ENCODE measurements at regions of chr19 and their contacts with region 1.

Region 1: GRCh38 chr19:13825489-13826391 is 30.5 kb downstream of the ZSWIM4 start:
- DNase-seq: peak; percentile 94
- ATAC-seq: peak; percentile 86
- H3K4me3 Mint-ChIP-seq: peak overlapping the region; percentile 37; the same call in 1 of the 2 replicates
- H3K27ac Mint-ChIP-seq: peak overlapping the region; percentile 92
- H3K4me1 Mint-ChIP-seq: peaks cover 15% of the 10 kb centered on the region
- H3K27me3 Mint-ChIP-seq: no peaks in the 10 kb centered on the region
- CTCF ChIP-seq: 0 out of 2 replicates have a peak, but pooled peaks have one; percentile 35

Region 2: DNA sequence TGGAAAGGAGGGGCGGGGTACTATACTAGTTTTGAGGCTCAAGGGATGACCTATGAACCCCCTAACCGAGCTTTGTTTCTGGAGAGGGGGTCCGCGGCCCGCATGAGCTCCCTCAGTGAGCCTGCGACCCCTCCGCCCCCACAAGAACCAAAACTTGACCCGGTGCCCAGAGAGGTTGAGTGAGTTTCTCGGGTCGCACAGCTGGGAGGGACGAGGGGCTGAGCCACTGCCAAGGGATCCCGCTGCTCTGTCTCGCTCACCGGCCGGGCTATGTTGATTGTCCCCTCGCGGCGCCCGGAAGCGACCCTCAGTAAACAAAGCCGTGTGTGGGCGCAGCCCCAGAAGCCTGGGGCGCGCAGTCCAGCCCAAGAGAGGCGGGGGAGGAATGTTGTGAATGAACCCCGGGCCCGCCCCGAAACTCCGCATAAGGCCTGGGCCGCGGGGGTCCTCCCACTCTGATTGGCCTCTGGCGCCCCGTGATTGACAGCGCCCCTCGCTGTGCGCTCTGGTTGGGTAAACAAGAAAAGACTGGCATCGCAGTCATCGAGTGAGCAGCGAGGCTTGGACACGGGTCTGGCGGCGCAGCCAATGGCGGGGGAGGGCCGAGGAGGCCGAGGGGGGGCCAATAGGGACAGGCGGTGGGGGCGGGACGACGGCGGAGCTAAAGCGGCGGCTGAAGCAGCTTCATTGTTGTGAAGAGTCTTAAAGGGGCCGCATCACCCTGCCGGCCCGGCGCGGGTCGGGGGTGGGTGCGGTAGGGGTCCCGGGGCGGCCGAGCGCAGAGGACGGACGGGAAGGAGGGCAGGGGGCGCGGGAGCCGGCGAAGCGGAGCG is 30.8 kb before region 1 on chr19 and contains the start of gene ZSWIM4:
- CTCF ChIA-PET with region 1: interaction called, 11 read pairs
- POLR2A ChIA-PET with region 1: interaction called, 6 read pairs
- DNase-seq: peak; percentile 100
- ATAC-seq: peak; percentile 91
- H3K4me3 Mint-ChIP-seq: peak within 1 kb of the TSS; percentile 92
- H3K27ac Mint-ChIP-seq: peak within 1 kb of the TSS; percentile 98
- H3K4me1 Mint-ChIP-seq: peaks cover 16% of the 10 kb centered on the region
- H3K27me3 Mint-ChIP-seq: no peaks in the 10 kb centered on the region
- CTCF ChIP-seq: no peak
- total RNA-seq, gene ZSWIM4: 33.4 to 35.5 TPM (median 34.2 TPM) in 3 replicates

Region 3: DNA sequence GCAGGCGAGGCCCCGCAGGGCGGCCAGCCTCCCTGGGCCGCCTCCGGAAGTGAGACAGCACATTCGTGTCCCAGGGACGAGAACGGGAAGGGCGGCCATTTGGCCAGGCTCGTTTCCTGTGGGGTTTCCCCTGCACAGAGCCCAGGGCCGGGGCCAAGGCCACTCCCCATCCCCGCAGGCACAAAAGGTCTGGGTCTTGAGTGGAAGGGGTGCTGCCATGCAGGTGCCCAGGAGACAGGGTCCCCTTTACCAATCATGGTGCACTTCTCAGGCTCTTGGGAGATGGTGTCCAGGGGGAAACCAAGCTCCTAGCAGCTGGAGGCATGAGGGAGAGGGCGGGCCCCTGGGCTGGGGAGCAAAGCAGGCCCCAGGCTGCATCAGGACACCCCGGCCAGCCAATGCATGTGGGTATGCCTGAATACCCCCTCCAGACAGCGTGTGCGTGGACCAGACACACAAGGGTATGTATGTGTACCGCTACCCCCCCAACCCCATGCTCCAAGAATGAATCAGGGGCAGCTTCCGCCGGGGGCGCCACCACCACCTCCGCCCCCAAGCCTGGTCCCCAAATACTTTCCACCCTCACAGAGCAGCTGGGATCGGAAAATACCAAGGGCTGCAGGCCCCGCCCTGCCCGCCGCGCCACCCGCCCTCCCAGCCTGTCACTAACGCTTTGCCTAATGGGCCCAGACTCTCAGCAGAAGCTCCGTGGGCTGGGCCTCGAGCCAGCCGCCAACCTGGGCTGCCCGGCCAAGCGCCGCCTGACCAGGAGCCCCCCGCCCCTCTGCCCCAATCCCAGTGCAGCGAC is 13.6 kb after region 1 on chr19:
- CTCF ChIA-PET with region 1: interaction called, 12 read pairs
- POLR2A ChIA-PET with region 1: interaction called, 3 read pairs
- DNase-seq: peak; percentile 57
- ATAC-seq: peak; percentile 45
- H3K4me3 Mint-ChIP-seq: no peak overlapping the region
- H3K27ac Mint-ChIP-seq: no peak overlapping the region
- H3K4me1 Mint-ChIP-seq: peaks cover 27% of the 10 kb centered on the region
- H3K27me3 Mint-ChIP-seq: no peaks in the 10 kb centered on the region
- CTCF ChIP-seq: no peak

Measured in WTC11 (cell line).